Dendritic cell treated with granulocyte-macrophage colony-stimulating factor and Interleukin-4, amounts not matched to agents 40 ng/mL and 50 ng/mL, for 4 days (primary cell): ENCODE measurements at regions of chr10 and their contacts with region 1.

Region 1: DNA sequence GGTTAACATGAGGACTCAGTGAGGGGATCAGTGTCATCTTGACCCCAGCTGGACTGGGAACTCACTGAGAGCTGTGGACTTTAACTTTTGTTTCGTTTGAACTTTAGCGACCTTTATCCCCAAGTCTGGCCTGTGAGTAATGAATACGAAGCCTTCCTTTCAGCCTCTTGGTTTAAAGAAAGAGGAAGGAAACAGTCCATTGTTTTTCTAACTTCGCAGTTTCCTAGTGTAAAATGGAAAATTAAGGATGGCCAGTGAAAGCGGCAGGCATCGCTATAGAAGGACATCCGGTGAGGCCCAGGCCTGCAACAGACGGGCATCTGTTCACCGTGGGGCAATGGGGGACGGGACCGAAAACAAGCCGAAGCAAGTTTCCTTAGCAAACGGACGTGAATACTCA is 44.1 kb upstream of the ADO start:
- H3K4me3 Mint-ChIP-seq: peak overlapping the region; percentile 37
- H3K27ac Mint-ChIP-seq: peak overlapping the region; percentile 80
- H3K4me1 Mint-ChIP-seq: peaks cover 58% of the 10 kb centered on the region
- H3K27me3 Mint-ChIP-seq: no peaks in the 10 kb centered on the region

Region 2: DNA sequence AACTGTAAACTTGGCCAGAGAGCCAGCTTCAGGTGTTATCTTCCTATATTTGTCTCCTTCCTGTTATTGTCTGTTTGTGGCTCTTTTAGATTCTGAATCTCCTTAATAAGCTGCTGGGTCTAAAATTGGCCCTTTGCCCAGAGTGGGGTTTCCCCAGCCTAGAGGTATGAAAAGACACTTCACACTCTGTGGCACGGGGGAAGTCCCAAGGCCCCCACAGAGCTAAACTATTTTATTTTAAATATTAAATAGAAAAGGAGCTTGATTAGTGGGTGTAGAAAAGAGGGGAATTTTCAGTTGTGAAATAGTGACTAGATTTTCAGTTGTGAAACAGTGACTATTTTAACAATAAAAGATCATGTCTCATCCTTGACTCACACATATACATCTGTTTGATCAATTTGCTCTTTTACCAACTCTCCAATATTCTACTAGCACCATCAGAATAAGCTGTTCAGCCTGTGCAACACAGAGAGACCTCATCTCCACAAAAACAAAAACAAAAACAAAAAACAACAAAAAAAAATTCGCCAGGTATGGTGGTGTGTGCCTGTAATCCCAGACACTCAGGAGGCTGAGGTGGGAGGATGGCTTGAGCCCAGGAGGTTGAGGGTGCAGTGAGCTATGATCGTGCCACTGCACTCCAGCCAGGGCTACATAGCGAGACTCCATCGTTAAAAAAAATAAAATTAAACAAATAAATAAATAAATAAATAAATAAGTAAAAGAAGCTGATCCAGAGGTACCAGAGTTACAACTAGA is 19.3 kb after region 1 on chr10:
- intact Hi-C with region 1: no loop called
- H3K4me3 Mint-ChIP-seq: no peak overlapping the region
- H3K27ac Mint-ChIP-seq: no peak overlapping the region
- H3K4me1 Mint-ChIP-seq: peaks cover 16% of the 10 kb centered on the region
- H3K27me3 Mint-ChIP-seq: peaks cover 10% of the 10 kb centered on the region

Region 3: GRCh38 chr10:62804356-62805230 is 44.2 kb after region 1 on chr10 and contains the start of gene ADO:
- intact Hi-C with region 1: loop called (anchors 5 kb)
- H3K4me3 Mint-ChIP-seq: peak within 1 kb of the TSS; percentile 93
- H3K27ac Mint-ChIP-seq: peak within 1 kb of the TSS; percentile 100
- H3K4me1 Mint-ChIP-seq: peaks cover 54% of the 10 kb centered on the region
- H3K27me3 Mint-ChIP-seq: peaks cover 5% of the 10 kb centered on the region